ENCODE measurements at regions of chr22 and their contacts with region 1.

Region 1: GRCh38 chr22:28882878-28883656 is at the start of gene ZNRF3:
- DNase-seq: peak; percentile 89
- H3K4me3 ChIP-seq: peak within 1 kb of the TSS; percentile 56 to 84 (median 72)
- H3K27ac ChIP-seq: peak within 1 kb of the TSS; percentile 16
- H3K4me1 ChIP-seq: peaks cover 23% of the 10 kb centered on the region
- H3K27me3 ChIP-seq: no peaks in the 10 kb centered on the region
- CTCF ChIP-seq: no peak
- total RNA-seq, gene ZNRF3: 9.5 to 14.5 TPM

Region 2: GRCh38 chr22:28639321-28639720 is 243.7 kb before region 1 on chr22:
- CTCF ChIA-PET with region 1: no interaction called
- dilution Hi-C with region 1: no loop called
- in situ Hi-C with region 1: no loop called
- intact Hi-C with region 1: no loop called
- DNase-seq: no peak
- H3K4me3 ChIP-seq: no peak overlapping the region
- H3K27ac ChIP-seq: no peak overlapping the region
- H3K4me1 ChIP-seq: no peaks in the 10 kb centered on the region
- H3K27me3 ChIP-seq: no peaks in the 10 kb centered on the region
- CTCF ChIP-seq: no peak

Region 3: DNA sequence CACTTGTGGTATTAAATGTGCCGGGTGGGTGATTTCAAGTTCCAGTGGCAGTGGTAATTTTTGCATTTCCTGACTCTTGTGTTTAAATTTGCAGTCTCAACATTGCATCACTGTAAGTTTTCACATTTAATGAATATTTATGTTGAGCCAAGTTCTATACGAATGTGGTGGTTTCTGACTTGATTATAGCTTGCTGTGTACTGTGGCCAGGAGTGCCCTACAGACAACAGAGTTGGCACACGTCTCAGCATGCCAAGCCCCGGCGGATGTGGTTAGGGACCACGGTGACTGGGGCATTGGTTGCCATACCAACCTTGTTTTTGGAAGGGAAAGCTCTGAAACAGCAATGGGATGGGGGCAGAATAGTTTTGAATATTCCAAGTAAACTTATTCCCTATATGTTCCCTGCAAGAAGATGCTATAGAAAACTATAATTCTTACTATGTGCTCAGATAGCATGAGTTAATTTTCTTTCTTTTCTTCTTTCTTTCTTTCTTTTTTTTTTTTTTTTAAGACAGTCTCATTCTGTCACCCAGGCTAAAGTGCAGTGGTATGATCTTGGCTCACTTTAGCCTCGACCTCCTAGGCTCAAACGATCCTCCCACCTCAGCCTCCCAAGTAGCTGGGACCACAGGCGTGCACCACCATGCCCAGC is 16.3 kb after region 1 on chr22:
- CTCF ChIA-PET with region 1: interaction called, 3 read pairs
- dilution Hi-C with region 1: no loop called
- in situ Hi-C with region 1: no loop called
- intact Hi-C with region 1: loop called (anchors 2 kb)
- DNase-seq: peak; percentile 87
- H3K4me3 ChIP-seq: no peak overlapping the region
- H3K27ac ChIP-seq: peak overlapping the region; percentile 66
- H3K4me1 ChIP-seq: peaks cover 69% of the 10 kb centered on the region
- H3K27me3 ChIP-seq: no peaks in the 10 kb centered on the region
- CTCF ChIP-seq: no peak

Region 4: DNA sequence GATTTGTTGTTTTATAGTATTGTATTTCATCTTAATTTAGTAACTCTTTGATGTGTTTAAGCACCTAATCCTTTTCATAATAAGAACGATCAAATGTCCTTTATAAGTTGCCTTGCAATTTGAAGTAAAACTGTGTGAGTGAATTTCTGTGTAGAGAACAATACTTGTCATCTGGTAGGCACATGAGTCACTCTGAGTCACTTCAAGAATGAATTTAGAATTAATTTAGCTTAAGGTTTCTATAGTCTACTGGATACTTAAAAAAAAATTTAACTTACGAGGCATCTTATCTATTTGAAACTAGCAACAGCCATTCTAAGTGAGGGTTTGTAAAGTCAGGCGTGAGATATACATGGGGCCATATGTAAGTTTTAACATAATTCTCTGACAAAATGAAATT is 93.5 kb after region 1 on chr22:
- CTCF ChIA-PET with region 1: no interaction called
- dilution Hi-C with region 1: no loop called
- in situ Hi-C with region 1: no loop called
- intact Hi-C with region 1: loop called (anchors 2 kb)
- DNase-seq: peak; percentile 75
- H3K4me3 ChIP-seq: peak overlapping the region in 1 of 3 experiments; percentile 52
- H3K27ac ChIP-seq: peak overlapping the region; percentile 87
- H3K4me1 ChIP-seq: peaks cover 33% of the 10 kb centered on the region
- H3K27me3 ChIP-seq: no peaks in the 10 kb centered on the region
- CTCF ChIP-seq: no peak

Region 5: DNA sequence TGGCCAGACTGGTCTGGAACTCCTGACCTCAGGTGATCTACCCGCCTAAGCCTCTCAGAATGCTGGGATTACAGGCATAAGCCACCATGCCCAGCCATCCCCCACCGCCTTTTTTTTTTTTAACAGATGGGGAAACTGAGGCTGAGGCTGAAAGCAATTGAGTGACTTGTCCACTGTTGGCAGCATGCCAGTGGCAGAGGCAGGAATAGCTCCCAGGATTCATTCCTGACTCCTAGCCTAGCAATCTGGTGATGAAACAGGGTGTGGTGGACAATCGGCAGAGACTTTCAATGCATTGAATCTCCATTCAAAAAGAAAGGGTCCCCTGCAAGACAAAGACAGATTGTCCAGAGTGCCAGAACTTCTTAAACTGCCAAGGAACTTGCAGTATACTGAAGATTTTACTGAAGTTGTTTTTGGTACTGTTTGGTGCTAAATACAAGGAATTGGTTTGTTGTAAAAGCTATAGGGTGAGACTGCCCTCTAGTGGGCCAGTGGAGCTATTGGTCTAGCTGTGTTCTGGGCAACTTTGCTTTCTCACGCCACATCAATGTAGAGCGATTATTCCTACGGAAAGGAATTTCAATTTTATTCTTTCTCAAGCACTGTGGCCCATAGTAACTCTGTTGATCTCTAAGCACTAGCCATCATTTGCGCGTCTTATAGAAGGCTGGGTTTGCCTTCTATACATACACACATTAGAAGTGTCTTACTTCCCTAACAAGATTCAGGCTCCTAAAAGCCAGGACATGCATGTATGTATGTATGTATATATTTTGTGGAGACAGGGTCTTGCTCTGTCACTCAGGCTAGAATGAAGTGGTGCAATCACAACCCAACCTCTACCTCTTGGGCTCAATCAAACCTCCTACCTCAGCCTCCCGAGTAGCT is 157.6 kb after region 1 on chr22:
- CTCF ChIA-PET with region 1: no interaction called
- dilution Hi-C with region 1: no loop called
- in situ Hi-C with region 1: no loop called
- intact Hi-C with region 1: loop called (anchors 1 kb)
- DNase-seq: peak; percentile 63
- H3K4me3 ChIP-seq: no peak overlapping the region
- H3K27ac ChIP-seq: peak overlapping the region; percentile 25
- H3K4me1 ChIP-seq: peaks cover 30% of the 10 kb centered on the region
- H3K27me3 ChIP-seq: no peaks in the 10 kb centered on the region
- CTCF ChIP-seq: peak; percentile 98 to 99

Region 6: GRCh38 chr22:29154364-29155048 is 271.4 kb after region 1 on chr22:
- CTCF ChIA-PET with region 1: interaction called, 3 read pairs
- dilution Hi-C with region 1: no loop called
- in situ Hi-C with region 1: no loop called
- intact Hi-C with region 1: loop called (anchors 10 kb)
- DNase-seq: peak; percentile 37
- H3K4me3 ChIP-seq: no peak overlapping the region
- H3K27ac ChIP-seq: no peak overlapping the region
- H3K4me1 ChIP-seq: no peaks in the 10 kb centered on the region
- H3K27me3 ChIP-seq: no peaks in the 10 kb centered on the region
- CTCF ChIP-seq: peak; percentile 90 to 97

Measured in mammary epithelial cell (primary cell).